HepG2 (cell line): ENCODE measurements at regions of chr7 and their contacts with region 1.

Region 1: GRCh38 chr7:32495298-32496176 is at the start of gene AVL9:
- DNase-seq: peak; percentile 91
- ATAC-seq: peak; percentile 96
- H3K4me3 ChIP-seq: peak within 1 kb of the TSS; percentile 89 to 94 (median 90)
- H3K27ac ChIP-seq: peak within 1 kb of the TSS; percentile 100
- H3K4me1 ChIP-seq: peaks cover 40% of the 10 kb centered on the region
- H3K27me3 ChIP-seq: no peaks in the 10 kb centered on the region
- CTCF ChIP-seq: no peak
- EP300 ChIP-seq: peak in 1 of 2 experiments; percentile 8; a peak in 1 of 4 replicates
- POLR2A ChIP-seq: peak; percentile 90 to 93
- RAD21 ChIP-seq: 0 out of 2 replicates have a peak, but pooled peaks have one; percentile 15
- total RNA-seq, gene AVL9: 48.0 and 65.3 TPM in 2 replicates

Region 2: DNA sequence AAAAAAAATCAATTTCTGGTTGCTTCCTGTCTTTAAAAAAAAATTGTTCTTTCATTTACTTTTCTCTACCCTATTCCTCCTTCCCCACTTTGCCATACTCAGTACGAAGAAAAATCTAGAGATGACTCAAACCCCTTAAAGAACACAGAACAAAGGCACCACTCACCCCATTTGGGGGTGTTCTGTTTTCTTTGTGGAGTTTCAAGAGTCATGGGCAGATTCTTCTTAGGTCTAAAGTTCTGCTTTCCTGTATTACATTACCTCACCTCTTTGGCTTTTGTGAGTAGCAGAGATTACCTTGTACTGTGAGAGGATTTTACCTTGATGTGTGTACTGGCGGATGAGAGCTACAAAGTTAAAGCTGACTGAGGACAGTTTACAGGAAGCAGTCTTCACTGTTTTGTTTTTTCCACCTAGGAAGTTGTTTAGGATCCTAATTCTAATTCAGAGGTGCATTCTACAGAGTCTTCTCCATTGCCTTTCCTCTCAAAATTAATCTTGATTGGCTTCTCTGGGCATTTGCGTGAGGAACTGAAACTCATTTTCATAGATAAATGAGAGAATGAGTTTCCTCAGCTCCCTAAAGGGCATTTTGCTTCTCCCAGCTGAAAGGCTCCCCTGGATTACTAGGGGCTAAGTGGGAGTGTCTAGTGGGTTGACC is 20.5 kb after region 1 on chr7:
- CTCF ChIA-PET with region 1: no interaction called
- POLR2A ChIA-PET with region 1: interaction called, 31 read pairs
- in situ Hi-C with region 1: no loop called
- intact Hi-C with region 1: no loop called
- DNase-seq: peak; percentile 92
- ATAC-seq: peak; percentile 97
- H3K4me3 ChIP-seq: peak overlapping the region in 1 of 3 experiments; percentile 18; a peak in 1 of 6 replicates
- H3K27ac ChIP-seq: peak overlapping the region; percentile 79
- H3K4me1 ChIP-seq: peaks cover 56% of the 10 kb centered on the region
- H3K27me3 ChIP-seq: no peaks in the 10 kb centered on the region
- CTCF ChIP-seq: no peak
- EP300 ChIP-seq: peak in 1 of 2 experiments; percentile 52; a peak in 1 of 4 replicates
- POLR2A ChIP-seq: no peak
- RAD21 ChIP-seq: no peak

Region 3: GRCh38 chr7:32670110-32671025 is 174.8 kb after region 1 on chr7:
- CTCF ChIA-PET with region 1: no interaction called
- POLR2A ChIA-PET with region 1: interaction called, 25 read pairs
- in situ Hi-C with region 1: no loop called
- intact Hi-C with region 1: loop called (anchors 2 kb)
- DNase-seq: peak; percentile 94
- ATAC-seq: peak; percentile 75
- H3K4me3 ChIP-seq: peak overlapping the region in 1 of 3 experiments; percentile 32; a peak in 1 of 6 replicates
- H3K27ac ChIP-seq: peak overlapping the region; percentile 97
- H3K4me1 ChIP-seq: peaks cover 70% of the 10 kb centered on the region
- H3K27me3 ChIP-seq: no peaks in the 10 kb centered on the region
- CTCF ChIP-seq: no peak
- EP300 ChIP-seq: peak; percentile 85 to 94
- POLR2A ChIP-seq: no peak
- RAD21 ChIP-seq: no peak

Region 4: DNA sequence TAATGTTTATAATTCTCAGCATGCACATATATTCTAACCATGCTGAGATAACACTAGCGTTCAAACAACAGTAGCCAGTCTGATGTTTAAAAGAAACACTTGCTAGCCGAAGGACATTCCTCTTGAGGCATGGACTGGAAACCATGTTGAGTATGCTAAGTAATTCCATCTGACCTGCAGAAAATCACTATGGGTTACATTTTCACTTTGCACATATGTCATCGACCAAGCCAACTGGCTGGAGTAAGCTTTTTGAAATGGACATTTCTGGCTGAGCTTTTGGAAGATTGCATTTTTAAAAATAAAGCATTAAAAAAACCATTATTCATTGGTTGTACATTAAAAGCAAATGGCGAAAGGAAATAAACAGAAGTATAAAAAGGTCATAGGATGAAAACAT is 722.1 kb after region 1 on chr7:
- CTCF ChIA-PET with region 1: no interaction called
- POLR2A ChIA-PET with region 1: no interaction called
- in situ Hi-C with region 1: no loop called
- intact Hi-C with region 1: loop called (anchors 10 kb)
- DNase-seq: no peak
- ATAC-seq: no peak
- H3K4me3 ChIP-seq: no peak overlapping the region
- H3K27ac ChIP-seq: no peak overlapping the region
- H3K4me1 ChIP-seq: peaks cover 81% of the 10 kb centered on the region
- H3K27me3 ChIP-seq: no peaks in the 10 kb centered on the region
- CTCF ChIP-seq: no peak
- EP300 ChIP-seq: no peak
- POLR2A ChIP-seq: no peak
- RAD21 ChIP-seq: no peak